Right ventricle myocardium superior (tissue), 1 donor: ENCODE measurements at regions of chr3 and their contacts with region 1.

Region 1: DNA sequence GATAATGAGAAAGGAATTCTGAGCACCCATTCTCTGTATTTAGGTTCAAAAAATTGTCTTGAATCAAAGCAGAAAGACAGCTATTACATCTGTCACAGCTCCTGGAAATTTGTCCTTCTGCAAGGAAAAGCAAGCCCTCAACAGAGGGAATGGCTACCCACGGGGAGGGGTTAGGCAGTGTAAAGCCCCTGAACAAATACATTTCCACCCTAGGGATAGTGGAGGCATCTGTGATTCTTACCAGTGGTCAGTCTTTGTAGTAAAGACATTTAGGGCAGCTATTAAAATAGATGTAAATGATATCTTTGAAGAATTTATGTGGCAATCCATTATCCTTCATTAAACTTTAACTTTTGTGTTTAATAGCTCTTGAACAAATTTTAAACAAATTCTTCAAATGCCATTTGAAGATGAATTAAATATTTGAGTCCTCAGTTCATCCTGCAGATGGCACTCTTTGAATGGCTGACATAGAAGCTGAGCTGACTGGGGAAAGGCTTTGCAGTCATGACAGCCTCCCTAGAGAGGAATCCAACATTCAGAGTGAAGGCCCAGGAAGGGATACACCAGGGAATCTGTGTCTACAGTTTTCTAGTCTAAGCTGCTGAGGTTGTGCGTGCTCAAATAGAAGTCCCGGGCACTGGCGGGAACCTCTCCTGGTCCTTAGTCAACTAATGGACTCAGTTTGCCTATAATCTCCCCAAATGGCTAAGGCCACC is 359.7 kb upstream of the ROPN1 start:
- DNase-seq: no peak
- ATAC-seq: peak; percentile 71

Region 2: DNA sequence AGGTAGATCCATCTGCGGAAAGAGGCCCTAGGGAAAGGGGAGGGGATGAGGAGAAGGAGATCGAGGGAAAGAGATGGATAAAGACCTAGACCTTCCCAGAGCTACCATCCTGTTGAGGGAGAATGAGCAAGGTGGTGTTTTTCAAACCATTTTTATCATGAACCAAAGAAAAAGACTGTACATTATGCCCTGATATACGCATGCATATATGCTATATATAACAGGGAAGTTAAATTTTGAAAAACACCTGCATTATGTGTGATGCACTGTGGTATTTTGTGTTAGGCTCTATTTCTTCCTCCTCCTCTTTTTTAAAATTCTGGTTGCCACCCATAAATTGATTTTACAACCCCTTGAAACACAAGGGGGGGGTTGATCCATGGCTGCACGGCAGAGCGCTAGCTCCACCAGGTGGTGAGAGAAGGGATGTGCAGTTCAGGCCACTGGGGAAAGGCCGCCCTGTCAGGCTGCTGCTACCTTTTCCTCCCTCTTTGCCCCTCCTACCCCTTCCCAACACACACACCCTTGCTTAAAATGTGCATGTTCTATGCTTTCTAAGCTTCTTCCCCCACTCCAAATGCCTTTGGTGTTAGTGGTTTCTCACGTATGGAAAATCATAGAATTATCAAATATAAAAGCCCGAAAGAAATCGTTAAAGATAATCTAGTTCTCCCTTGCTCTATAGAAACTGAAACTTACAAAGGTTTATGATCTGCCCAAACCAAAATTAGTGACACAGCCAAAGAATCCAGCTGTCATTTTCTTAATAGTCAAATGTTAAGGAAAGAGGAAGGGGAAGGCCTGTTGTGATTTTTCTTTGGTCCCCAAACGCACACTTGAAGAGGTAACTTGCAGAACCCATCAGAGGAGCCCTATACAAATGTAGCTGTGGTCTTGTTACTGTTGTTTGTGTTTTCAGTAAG is 116.7 kb after region 1 on chr3:
- intact Hi-C with region 1: loop called (anchors 1 kb)
- DNase-seq: peak; percentile 47
- ATAC-seq: peak; percentile 78

Region 3: DNA sequence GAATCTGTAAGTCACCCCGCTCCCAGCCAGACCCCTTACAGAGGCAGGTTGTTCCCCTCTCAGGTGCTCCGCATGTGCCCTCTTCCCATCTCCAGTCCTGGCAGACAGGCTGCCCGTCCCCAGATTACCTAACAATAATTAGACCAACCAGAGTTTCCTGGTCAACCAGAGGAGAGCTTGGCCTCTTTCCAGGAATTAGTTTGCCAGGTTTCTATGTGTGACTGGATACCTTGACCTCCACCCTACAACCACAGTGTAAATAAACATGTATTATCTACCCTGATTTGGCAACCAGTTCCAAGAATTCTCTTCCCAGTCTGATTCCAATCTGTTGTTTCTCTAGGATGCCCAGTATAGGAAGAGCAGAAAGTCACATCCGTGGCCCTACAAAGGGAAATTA is 200.7 kb after region 1 on chr3:
- intact Hi-C with region 1: loop called (anchors 5 kb)
- DNase-seq: no peak
- ATAC-seq: peak; percentile 74